ENCODE measurements at regions of chr6 and their contacts with region 1.

Region 1: GRCh38 chr6:81752138-81752920 is at the start of gene TENT5A:
- DNase-seq: peak; percentile 95
- H3K4me3 ChIP-seq: peak within 1 kb of the TSS; percentile 68 to 94 (median 81)
- H3K27ac ChIP-seq: peak within 1 kb of the TSS; percentile 95 to 99 (median 98)
- H3K4me1 ChIP-seq: peaks cover 3 to 38% (median 19%) of the 10 kb centered on the region in 4 donors
- H3K27me3 ChIP-seq: no peaks in the 10 kb centered on the region
- CTCF ChIP-seq: peak in 1 of 5 experiments; percentile 13
- EP300 ChIP-seq: no peak
- POLR2A ChIP-seq: peak; percentile 96
- total RNA-seq, gene TENT5A: 5.6 to 42.1 (median 34.2) TPM

Region 2: GRCh38 chr6:80106418-80107235 is 1645.7 kb before region 1 on chr6 and contains the start of gene BCKDHB:
- in situ Hi-C with region 1: no loop called
- intact Hi-C with region 1: loop called (anchors 10 kb)
- DNase-seq: peak; percentile 99
- H3K4me3 ChIP-seq: peak within 1 kb of the TSS; percentile 77 to 98 (median 90)
- H3K27ac ChIP-seq: peak within 1 kb of the TSS; percentile 92 to 94 (median 94)
- H3K4me1 ChIP-seq: peaks cover 7 to 20% (median 8%) of the 10 kb centered on the region in 4 donors
- H3K27me3 ChIP-seq: no peaks in the 10 kb centered on the region
- CTCF ChIP-seq: no peak
- EP300 ChIP-seq: no peak
- POLR2A ChIP-seq: peak; percentile 94
- total RNA-seq, gene BCKDHB: 10.9 to 32.9 (median 29.7) TPM

Region 3: GRCh38 chr6:80133020-80133419 is 1619.3 kb before region 1 on chr6:
- in situ Hi-C with region 1: loop called in 1 of 4 experiments (anchors 25 kb)
- intact Hi-C with region 1: loop called (anchors 10 kb)
- DNase-seq: peak; percentile 80
- H3K4me3 ChIP-seq: no peak overlapping the region
- H3K27ac ChIP-seq: no peak overlapping the region
- H3K4me1 ChIP-seq: peaks cover 3 to 22% (median 10%) of the 10 kb centered on the region in 4 donors
- H3K27me3 ChIP-seq: no peaks in the 10 kb centered on the region
- CTCF ChIP-seq: peak; percentile 43 to 53 (median 52)
- EP300 ChIP-seq: no peak
- POLR2A ChIP-seq: no peak

Region 4: DNA sequence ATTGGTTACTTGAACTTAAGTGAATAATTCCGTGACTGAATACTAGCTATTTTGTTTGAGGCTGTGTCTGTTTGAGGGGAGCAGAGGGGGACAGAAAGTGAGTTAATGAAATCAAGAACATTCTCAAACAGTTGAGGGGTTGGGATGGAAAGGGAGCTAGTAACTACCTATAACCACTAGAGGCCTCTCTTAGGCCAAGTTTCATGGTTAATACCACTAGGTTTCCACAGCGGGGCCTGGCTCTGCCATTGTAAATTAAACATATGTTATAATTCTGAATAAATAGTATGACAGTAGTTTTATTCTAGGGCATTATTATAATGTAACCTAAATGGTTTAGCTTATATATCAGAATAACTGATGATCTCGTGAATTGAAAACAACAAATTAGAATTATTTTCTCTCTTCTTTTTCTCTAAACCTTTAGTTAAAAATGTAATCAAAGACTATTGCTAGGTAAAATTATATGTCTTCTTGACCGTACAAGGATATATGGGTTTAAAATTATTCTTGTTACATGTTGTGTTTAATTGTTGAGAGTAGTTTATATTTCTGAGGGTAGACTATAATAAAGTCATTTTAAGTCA is 1537.8 kb before region 1 on chr6:
- in situ Hi-C with region 1: no loop called
- intact Hi-C with region 1: loop called (anchors 5 kb)
- DNase-seq: peak; percentile 11
- H3K4me3 ChIP-seq: no peak overlapping the region
- H3K27ac ChIP-seq: no peak overlapping the region
- H3K4me1 ChIP-seq: peaks cover 0 to 17% (median 0%) of the 10 kb centered on the region in 4 donors
- H3K27me3 ChIP-seq: no peaks in the 10 kb centered on the region
- CTCF ChIP-seq: peak; percentile 58 to 65 (median 60)
- EP300 ChIP-seq: no peak
- POLR2A ChIP-seq: no peak

Region 5: GRCh38 chr6:80605165-80605989 is 1147.0 kb before region 1 on chr6:
- in situ Hi-C with region 1: loop called in 2 of 4 experiments (anchors 25 kb)
- intact Hi-C with region 1: loop called (anchors 5 kb)
- DNase-seq: no peak
- H3K4me3 ChIP-seq: no peak overlapping the region
- H3K27ac ChIP-seq: no peak overlapping the region
- H3K4me1 ChIP-seq: peaks cover 0 to 4% (median 0%) of the 10 kb centered on the region in 4 donors
- H3K27me3 ChIP-seq: no peaks in the 10 kb centered on the region
- CTCF ChIP-seq: peak; percentile 38 to 56 (median 49)
- EP300 ChIP-seq: no peak
- POLR2A ChIP-seq: no peak

Region 6: GRCh38 chr6:81562169-81562568 is 190.2 kb before region 1 on chr6:
- in situ Hi-C with region 1: no loop called
- intact Hi-C with region 1: loop called (anchors 10 kb)
- DNase-seq: peak; percentile 12
- H3K4me3 ChIP-seq: no peak overlapping the region
- H3K27ac ChIP-seq: peak overlapping the region; percentile 63 to 74 (median 64)
- H3K4me1 ChIP-seq: peaks cover 0 to 22% (median 20%) of the 10 kb centered on the region in 4 donors
- H3K27me3 ChIP-seq: no peaks in the 10 kb centered on the region
- CTCF ChIP-seq: no peak
- EP300 ChIP-seq: no peak
- POLR2A ChIP-seq: no peak

Region 7: DNA sequence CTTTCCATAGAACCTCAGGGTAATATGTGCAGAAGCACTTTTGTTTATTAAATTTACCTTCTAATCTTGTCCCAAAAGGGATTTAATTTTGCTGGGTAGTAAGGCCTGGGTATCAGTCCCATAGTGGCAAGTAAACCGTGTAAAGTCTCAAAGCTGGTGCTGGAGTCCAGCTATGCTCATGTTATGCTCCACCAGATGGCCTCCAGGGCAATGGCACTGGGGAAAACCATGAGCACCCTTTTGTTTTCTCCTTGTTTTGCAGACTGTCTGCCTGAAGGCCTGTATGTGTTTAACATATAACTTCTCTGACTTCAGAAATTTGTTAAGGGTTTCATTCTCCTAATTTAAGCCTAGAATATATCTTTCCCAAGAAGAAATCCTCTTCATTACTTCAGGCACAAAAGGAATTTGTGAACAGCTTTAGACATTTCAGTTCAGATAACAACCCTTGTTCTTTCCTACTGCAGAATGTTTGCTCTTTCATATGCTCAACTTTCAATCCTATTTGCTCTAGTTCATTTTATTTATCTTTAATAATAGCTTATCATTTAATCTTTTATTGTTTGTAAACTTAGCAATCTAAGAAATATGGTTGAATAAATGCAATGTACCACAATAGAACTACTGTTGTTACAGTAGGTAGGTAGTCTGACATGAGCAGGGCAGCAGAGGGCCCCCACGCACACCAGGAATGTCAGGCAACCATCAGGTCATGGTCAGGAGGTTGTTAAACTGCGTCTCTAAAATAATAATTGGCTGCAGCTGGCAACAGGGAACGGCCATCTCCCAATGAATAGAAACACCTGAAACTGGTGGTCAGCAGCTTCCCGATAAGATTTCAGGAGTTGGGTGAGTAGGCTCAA is 162.6 kb before region 1 on chr6:
- in situ Hi-C with region 1: no loop called
- intact Hi-C with region 1: no loop called
- DNase-seq: no peak
- H3K4me3 ChIP-seq: no peak overlapping the region
- H3K27ac ChIP-seq: no peak overlapping the region
- H3K4me1 ChIP-seq: no peaks in the 10 kb centered on the region
- H3K27me3 ChIP-seq: no peaks in the 10 kb centered on the region
- CTCF ChIP-seq: no peak
- EP300 ChIP-seq: no peak
- POLR2A ChIP-seq: no peak

Measured in transverse colon (tissue), 4 donors.